CD14-positive monocyte (primary cell): ENCODE measurements at regions of chr1 and their contacts with region 1.

Region 1: DNA sequence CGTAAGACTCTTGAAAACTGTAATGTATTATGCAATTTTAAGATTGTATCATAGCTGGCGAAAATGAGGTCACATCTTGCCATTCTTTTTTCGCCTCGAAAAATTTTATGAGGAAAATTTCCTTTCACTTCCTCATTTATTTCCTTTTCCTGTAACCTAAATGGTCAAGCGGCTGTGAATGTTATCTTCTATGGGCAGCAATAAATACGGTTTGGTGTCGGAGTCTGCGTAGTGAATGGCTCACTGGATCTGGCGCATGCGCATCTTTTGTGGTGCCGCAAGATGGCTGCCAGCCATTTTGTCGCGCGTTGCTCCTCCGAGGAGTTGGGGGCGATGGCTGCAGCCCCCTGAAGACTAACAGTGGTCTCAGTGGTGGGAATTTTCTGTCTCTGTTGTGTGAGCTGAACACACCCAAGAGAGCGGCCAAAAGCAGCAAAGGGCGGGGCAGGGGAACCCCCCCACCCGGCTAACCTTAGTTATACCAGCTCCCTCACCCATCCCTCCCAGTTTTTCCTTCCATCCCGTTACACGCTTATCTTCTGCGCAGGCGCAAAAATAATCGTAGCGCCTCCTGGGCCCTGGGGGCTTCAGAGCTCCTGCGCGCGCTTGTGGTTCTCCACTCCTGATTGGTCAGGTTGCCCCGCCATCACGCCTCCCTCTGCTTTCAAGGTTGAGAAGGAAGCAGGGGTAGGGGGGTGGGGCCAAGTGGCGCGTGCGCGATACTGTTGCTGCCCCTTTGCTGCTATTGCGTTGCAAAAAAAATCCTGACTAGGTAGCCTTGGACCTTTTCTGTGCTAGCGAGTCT is at the start of gene RPRD2:
- DNase-seq: peak; percentile 96 to 99 (median 98)
- H3K4me3 ChIP-seq: peak within 1 kb of the TSS; percentile 77 to 91 (median 84)
- H3K4me3 Mint-ChIP-seq: peak within 1 kb of the TSS; percentile 93 to 96
- H3K27ac ChIP-seq: peak within 1 kb of the TSS; percentile 93 to 95
- H3K27ac Mint-ChIP-seq: peak within 1 kb of the TSS; percentile 98 to 100 (median 100)
- H3K4me1 ChIP-seq: peaks cover 26 to 32% of the 10 kb centered on the region in 2 donors
- H3K4me1 Mint-ChIP-seq: peaks cover 33% of the 10 kb centered on the region
- H3K27me3 ChIP-seq: no peaks in the 10 kb centered on the region
- H3K27me3 Mint-ChIP-seq: peaks cover 0 to 1% (median 0%) of the 10 kb centered on the region in 3 donors
- CTCF ChIP-seq: no peak
- polyA plus RNA-seq, gene RPRD2: 5.9 to 9.7 (median 8.2) TPM

Region 2: GRCh38 chr1:150321826-150322166 is 41.8 kb before region 1 on chr1:
- intact Hi-C with region 1: loop called (anchors 5 kb)
- DNase-seq: peak in 2 of 3 donors; percentile 0 to 22
- H3K4me3 ChIP-seq: peak overlapping the region; percentile 86 to 94 (median 93)
- H3K4me3 Mint-ChIP-seq: peak overlapping the region; percentile 99 to 100
- H3K27ac ChIP-seq: peak overlapping the region; percentile 92 to 93
- H3K27ac Mint-ChIP-seq: peak overlapping the region; percentile 99 to 100 (median 100)
- H3K4me1 ChIP-seq: peaks cover 21% of the 10 kb centered on the region in 2 donors
- H3K4me1 Mint-ChIP-seq: peaks cover 19% of the 10 kb centered on the region
- H3K27me3 ChIP-seq: no peaks in the 10 kb centered on the region
- H3K27me3 Mint-ChIP-seq: no peaks in the 10 kb centered on the region
- CTCF ChIP-seq: no peak